ENCODE measurements at regions of chr1 and their contacts with region 1.

Region 1: GRCh38 chr1:145978854-145979759 is 14.6 kb downstream of the POLR3GL start:
- DNase-seq: peak; percentile 94 to 99
- H3K4me3 ChIP-seq: peak overlapping the region; percentile 35 to 37
- H3K27ac ChIP-seq: peak overlapping the region; percentile 90 to 98
- H3K4me1 ChIP-seq: peaks cover 36 to 63% of the 10 kb centered on the region in 2 donors
- H3K27me3 ChIP-seq: no peaks in the 10 kb centered on the region
- CTCF ChIP-seq: peak in 1 of 3 experiments; percentile 23

Region 2: GRCh38 chr1:145757420-145757819 is 221.7 kb before region 1 on chr1:
- intact Hi-C with region 1: no loop called
- DNase-seq: no peak
- H3K4me3 ChIP-seq: no peak overlapping the region
- H3K27ac ChIP-seq: no peak overlapping the region
- H3K4me1 ChIP-seq: peaks cover 0 to 6% of the 10 kb centered on the region in 2 donors
- H3K27me3 ChIP-seq: no peaks in the 10 kb centered on the region
- CTCF ChIP-seq: no peak

Region 3: DNA sequence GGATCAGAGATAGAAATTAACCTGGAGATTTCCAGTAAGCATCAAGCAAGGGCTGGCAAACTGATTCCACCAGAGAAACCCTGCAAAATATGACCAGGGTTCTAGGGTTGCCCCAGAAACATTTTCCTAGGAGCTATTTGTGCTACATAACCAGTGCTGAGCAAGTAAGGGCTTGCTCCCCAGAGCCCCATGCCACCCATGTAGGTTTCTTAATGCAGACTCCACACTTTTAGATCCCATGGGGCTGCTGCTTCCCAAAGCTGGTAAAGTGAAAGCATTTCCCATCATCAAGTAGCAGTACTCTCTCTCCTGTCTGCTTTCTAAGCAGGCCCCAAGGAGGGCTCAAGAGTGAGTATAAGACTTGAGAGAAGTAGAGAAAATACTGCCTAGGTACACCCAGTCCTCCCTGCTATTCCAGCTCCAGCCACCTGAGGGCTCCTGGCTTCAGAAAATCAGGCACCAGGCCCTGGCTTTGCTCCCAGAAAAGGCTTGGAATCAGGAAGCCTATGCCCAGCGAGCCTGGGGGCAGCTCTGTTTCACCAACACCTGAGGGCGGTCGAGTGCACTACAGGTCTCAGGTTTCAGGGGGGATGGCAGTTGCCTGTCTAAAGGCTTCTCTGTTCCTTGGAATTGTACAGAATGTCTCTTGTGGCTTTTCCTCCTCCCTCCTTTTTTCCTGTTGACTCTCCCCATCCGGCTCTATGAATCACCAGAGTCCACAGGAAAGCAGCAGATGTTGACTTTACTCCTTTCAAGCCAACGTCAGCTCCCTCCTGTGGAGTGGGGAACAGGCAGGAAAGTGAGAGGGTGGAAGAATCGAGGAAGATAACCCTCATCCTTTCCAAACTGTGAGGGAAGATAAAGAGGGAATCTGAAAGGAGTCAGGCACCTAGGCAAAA is 87.3 kb before region 1 on chr1:
- intact Hi-C with region 1: loop called (anchors 5 kb)
- DNase-seq: peak; percentile 89 to 99
- H3K4me3 ChIP-seq: peak overlapping the region; percentile 10 to 23
- H3K27ac ChIP-seq: peak overlapping the region; percentile 92 to 98
- H3K4me1 ChIP-seq: peaks cover 14 to 36% of the 10 kb centered on the region in 2 donors
- H3K27me3 ChIP-seq: no peaks in the 10 kb centered on the region
- CTCF ChIP-seq: peak; percentile 93 to 97 (median 95)

Region 4: DNA sequence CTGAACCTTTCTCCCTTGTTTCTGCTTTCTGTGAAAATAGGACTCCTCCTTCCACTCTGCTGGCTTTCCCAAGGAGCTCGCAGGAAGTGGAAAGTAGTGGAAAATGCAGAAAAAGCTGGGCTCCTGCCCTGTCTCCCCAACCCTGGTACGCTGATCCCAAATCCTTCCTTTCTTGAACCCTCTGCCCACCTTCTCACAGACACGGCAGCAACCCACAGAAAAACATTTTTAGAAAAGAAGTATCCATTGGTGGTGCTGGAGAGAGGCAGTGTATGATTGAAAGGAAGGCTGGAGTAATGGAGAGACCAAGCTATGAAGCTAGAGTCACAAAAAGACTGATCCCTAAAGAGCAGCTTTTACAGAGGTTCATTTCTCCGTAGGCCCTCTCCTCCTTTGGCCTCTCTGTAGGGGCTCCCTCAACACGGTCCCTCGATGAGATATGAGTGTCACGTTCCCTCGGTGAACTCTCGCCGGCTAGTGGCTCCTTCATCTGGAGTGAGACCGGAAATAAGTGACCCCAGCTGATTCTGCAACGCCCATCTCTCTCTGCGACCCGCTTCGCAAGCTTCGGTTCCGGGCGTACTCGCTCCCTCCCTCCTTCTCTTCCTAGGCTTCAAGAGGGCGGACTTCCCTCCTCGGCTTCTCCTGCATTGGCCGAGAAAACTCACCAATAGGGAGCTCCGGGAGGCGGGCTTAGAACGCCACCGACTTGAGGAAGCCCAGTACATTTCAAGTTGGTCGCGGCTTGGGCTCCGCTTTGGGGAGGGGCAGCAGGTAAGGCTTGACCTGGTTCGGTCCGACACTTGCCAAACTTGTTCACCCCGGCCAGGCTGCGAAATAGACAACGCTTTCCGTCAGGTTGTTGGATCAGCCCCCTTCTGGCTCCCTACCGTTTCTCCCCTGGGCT is 14.9 kb before region 1 on chr1 and contains the starts of genes ANKRD34A and POLR3GL:
- intact Hi-C with region 1: loop called (anchors 1 kb)
- DNase-seq: peak; percentile 94 to 99
- H3K4me3 ChIP-seq: peak within 1 kb of the TSS; percentile 65 to 92
- H3K27ac ChIP-seq: peak within 1 kb of the TSS; percentile 96 to 97
- H3K4me1 ChIP-seq: peaks cover 17 to 36% of the 10 kb centered on the region in 2 donors
- H3K27me3 ChIP-seq: no peaks in the 10 kb centered on the region
- CTCF ChIP-seq: no peak
- total RNA-seq, gene ANKRD34A: 13.6 TPM
- total RNA-seq, gene POLR3GL: 22.9 TPM

Region 5: GRCh38 chr1:145996433-145997015 is 17.4 kb after region 1 on chr1 and contains the start of gene TXNIP:
- intact Hi-C with region 1: loop called (anchors 1 kb)
- DNase-seq: peak; percentile 97 to 99
- H3K4me3 ChIP-seq: peak within 1 kb of the TSS; percentile 79 to 88
- H3K27ac ChIP-seq: peak within 1 kb of the TSS; percentile 89 to 95
- H3K4me1 ChIP-seq: peaks cover 3 to 37% of the 10 kb centered on the region in 2 donors
- H3K27me3 ChIP-seq: no peaks in the 10 kb centered on the region
- CTCF ChIP-seq: no peak
- total RNA-seq, gene TXNIP: 877 TPM

Region 6: GRCh38 chr1:146007506-146008133 is 28.5 kb after region 1 on chr1:
- intact Hi-C with region 1: loop called (anchors 1 kb)
- DNase-seq: no peak
- H3K4me3 ChIP-seq: no peak overlapping the region
- H3K27ac ChIP-seq: peak overlapping the region; percentile 80 to 85
- H3K4me1 ChIP-seq: peaks cover 0 to 10% of the 10 kb centered on the region in 2 donors
- H3K27me3 ChIP-seq: no peaks in the 10 kb centered on the region
- CTCF ChIP-seq: no peak